HepG2 (cell line): ENCODE measurements at regions of chrX and their contacts with region 1.

Region 1: DNA sequence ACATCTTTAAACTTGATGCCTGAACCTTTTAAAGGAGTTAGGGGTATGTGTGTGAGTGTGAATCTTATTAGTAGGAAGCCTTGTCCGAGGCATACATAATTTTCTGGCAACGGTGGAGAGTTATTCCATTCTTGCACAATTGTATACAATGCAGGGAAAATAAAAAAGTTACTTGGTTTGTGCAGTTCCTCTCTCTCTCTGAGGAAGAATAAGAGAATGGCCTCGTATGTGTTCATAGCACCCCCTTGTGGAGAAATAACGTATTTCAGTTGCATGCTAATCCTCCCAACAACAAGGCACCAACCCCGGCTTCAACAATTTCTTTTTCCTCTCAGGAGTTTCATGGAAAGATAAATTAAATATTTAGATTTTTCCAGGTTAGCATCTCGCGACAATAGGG is 33.7 kb upstream of the FGF13 start:
- DNase-seq: peak; percentile 12
- ATAC-seq: peak; percentile 61
- H3K4me3 ChIP-seq: no peak overlapping the region
- H3K27ac ChIP-seq: no peak overlapping the region
- H3K4me1 ChIP-seq: no peaks in the 10 kb centered on the region
- H3K27me3 ChIP-seq: no peaks in the 10 kb centered on the region
- CTCF ChIP-seq: peak; percentile 54
- EP300 ChIP-seq: no peak
- POLR2A ChIP-seq: no peak
- RAD21 ChIP-seq: no peak

Region 2: DNA sequence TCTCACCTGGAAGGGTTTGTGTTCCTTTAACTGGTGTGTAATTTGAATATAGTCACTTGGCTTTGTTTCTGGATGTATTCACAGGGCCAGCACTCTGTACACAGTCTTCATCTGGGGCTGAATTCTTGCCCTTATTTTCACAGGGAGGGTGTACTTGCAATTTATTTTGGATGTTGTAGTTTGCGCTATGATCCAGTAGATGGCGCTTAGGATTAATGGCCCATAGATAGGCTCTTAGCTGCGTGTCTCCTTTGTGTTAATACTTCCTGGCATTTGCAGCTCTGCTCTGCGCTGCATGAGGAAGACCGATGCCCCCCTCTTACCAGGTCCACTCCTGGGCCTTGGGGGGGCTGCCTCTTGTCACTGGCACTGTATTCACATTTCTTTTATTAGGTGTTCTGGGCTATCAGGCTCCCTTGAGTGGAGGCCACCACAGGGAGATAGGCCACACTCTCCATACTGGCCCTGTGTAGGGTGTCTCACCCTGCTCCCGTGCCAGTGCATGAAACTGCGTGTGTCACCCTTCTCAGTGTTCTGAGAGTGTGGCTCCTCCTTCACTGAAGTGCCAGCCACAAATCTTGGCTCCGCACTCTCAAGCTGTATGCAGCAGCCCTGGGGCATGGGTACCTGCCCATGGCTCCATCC is 617.0 kb before region 1 on chrX:
- CTCF ChIA-PET with region 1: interaction called, 10 read pairs
- POLR2A ChIA-PET with region 1: no interaction called
- in situ Hi-C with region 1: no loop called
- intact Hi-C with region 1: loop called (anchors 2 kb)
- DNase-seq: peak; percentile 2
- ATAC-seq: peak; percentile 81
- H3K4me3 ChIP-seq: no peak overlapping the region
- H3K27ac ChIP-seq: no peak overlapping the region
- H3K4me1 ChIP-seq: no peaks in the 10 kb centered on the region
- H3K27me3 ChIP-seq: no peaks in the 10 kb centered on the region
- CTCF ChIP-seq: peak; percentile 56
- EP300 ChIP-seq: no peak
- POLR2A ChIP-seq: no peak
- RAD21 ChIP-seq: no peak

Region 3: GRCh38 chrX:138191998-138192397 is 553.2 kb before region 1 on chrX:
- CTCF ChIA-PET with region 1: interaction called, 4 read pairs
- POLR2A ChIA-PET with region 1: no interaction called
- in situ Hi-C with region 1: loop called (anchors 25 kb)
- intact Hi-C with region 1: loop called (anchors 1 kb)
- DNase-seq: peak; percentile 4
- ATAC-seq: no peak
- H3K4me3 ChIP-seq: no peak overlapping the region
- H3K27ac ChIP-seq: no peak overlapping the region
- H3K4me1 ChIP-seq: no peaks in the 10 kb centered on the region
- H3K27me3 ChIP-seq: no peaks in the 10 kb centered on the region
- CTCF ChIP-seq: peak; percentile 30; the same call in 1 of the 2 replicates
- EP300 ChIP-seq: no peak
- POLR2A ChIP-seq: no peak
- RAD21 ChIP-seq: no peak

Region 4: DNA sequence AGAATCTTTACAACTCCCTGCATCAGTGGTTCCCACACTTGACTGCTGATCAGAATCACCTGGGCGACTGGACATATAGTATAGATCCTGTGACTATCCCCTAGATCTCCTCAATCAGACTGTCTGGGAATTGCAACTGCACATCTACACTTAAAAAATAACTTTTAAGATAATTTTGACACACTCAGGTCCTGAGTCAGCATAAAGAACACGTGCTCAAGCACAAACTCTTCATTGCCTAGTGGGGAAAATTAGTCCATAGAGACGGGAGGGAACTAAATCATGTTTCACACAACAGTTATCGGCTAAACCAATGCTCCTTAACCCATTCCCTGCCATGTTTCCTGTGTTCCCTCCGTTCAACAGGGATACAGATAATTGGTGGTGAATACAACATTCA is 209.8 kb after region 1 on chrX:
- CTCF ChIA-PET with region 1: no interaction called
- POLR2A ChIA-PET with region 1: no interaction called
- in situ Hi-C with region 1: no loop called
- intact Hi-C with region 1: no loop called
- DNase-seq: no peak
- ATAC-seq: no peak
- H3K4me3 ChIP-seq: no peak overlapping the region
- H3K27ac ChIP-seq: no peak overlapping the region
- H3K4me1 ChIP-seq: no peaks in the 10 kb centered on the region
- H3K27me3 ChIP-seq: no peaks in the 10 kb centered on the region
- CTCF ChIP-seq: no peak
- EP300 ChIP-seq: no peak
- POLR2A ChIP-seq: no peak
- RAD21 ChIP-seq: no peak